ENCODE measurements at regions of chr20 and their contacts with region 1.

Region 1: DNA sequence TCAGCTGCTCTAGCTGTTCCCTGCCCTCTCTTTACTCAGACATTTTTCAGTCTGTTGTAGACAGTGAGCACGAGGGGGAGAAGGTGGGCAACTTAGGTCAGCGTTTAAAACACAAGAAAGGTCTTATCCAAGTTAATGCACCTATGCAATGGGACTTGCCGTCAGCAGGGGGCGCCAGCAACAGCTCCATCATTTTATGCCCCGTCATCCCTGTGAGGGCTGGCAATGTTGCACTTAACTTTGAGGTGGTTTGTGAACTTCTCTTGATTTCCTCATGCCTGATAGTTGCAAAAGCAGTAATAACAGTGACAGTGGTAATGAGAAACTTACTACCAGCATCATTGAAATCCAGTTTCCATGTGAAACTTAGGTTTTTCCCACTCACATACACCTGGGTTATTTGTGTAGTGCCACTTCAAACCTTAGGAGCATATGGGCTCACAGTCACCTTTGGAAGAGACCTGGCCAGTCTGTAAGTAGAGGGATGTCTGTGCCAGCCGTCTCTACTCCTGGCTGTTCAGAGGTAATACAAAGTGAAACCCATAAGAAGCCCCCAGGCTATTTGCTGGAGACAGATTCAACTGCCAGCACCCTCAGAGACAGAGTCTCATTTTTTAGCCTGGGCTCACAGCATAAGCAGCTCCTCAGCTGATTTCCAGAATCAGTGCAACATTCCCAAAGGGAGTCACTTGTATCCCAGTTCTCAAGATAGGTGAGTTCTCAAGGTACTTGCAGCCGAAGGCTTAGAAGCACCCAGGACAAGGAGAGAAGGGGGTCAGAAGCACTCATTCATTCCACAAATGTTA is 44.8 kb upstream of the ID1 start:
- DNase-seq: peak; percentile 74
- H3K4me3 ChIP-seq: no peak overlapping the region
- H3K27ac ChIP-seq: peak overlapping the region; percentile 49
- H3K4me1 ChIP-seq: no peaks in the 10 kb centered on the region
- H3K27me3 ChIP-seq: no peaks in the 10 kb centered on the region
- CTCF ChIP-seq: peak; percentile 86

Region 2: GRCh38 chr20:31608256-31608980 is 48.1 kb after region 1 on chr20:
- intact Hi-C with region 1: loop called (anchors 2 kb)
- DNase-seq: peak; percentile 93
- H3K4me3 ChIP-seq: peak overlapping the region; percentile 19
- H3K27ac ChIP-seq: peak overlapping the region; percentile 77
- H3K4me1 ChIP-seq: peaks cover 9% of the 10 kb centered on the region
- H3K27me3 ChIP-seq: no peaks in the 10 kb centered on the region
- CTCF ChIP-seq: no peak

Measured in colonic mucosa (tissue), 4 donors.